Panc1 (cell line): ENCODE measurements at regions of chr1 and their contacts with region 1.

Region 1: GRCh38 chr1:178513278-178514022 is 541 bp downstream of the TEX35 start:
- DNase-seq: no peak
- ATAC-seq: peak; percentile 49; the same call in 1 of the 2 replicates
- H3K4me3 ChIP-seq: no peak overlapping the region
- H3K27ac ChIP-seq: no peak overlapping the region
- H3K4me1 ChIP-seq: no peaks in the 10 kb centered on the region
- H3K27me3 ChIP-seq: no peaks in the 10 kb centered on the region
- CTCF ChIP-seq: no peak

Region 2: DNA sequence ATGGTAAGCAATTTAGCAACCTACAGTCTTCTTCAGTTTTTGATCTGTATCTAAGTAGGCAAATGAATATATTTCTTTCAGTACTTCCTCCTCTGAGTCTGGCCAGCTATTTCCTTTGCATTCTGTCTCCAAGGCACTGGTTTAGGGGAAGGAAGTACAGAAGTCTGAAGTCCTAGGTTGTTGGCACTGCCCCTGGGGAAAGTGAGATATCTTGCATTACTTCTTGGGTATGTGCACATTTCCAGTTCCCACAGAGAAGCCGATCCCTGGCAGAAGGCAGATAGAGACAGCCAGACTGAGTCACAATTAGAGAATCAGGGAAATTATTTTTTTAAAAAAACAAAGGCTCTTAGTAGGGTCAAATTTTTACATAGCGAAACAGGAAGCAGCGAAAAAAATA is 320.8 kb before region 1 on chr1:
- CTCF ChIA-PET with region 1: no interaction called
- POLR2A ChIA-PET with region 1: no interaction called
- in situ Hi-C with region 1: no loop called
- intact Hi-C with region 1: no loop called
- DNase-seq: no peak
- ATAC-seq: peak; percentile 69
- H3K4me3 ChIP-seq: peak overlapping the region in 1 of 2 experiments; percentile 16; a peak in 1 of 4 replicates
- H3K27ac ChIP-seq: peak overlapping the region; percentile 35
- H3K4me1 ChIP-seq: peaks cover 15% of the 10 kb centered on the region; the same call in 1 of the 2 replicates
- H3K27me3 ChIP-seq: no peaks in the 10 kb centered on the region
- CTCF ChIP-seq: no peak

Region 3: DNA sequence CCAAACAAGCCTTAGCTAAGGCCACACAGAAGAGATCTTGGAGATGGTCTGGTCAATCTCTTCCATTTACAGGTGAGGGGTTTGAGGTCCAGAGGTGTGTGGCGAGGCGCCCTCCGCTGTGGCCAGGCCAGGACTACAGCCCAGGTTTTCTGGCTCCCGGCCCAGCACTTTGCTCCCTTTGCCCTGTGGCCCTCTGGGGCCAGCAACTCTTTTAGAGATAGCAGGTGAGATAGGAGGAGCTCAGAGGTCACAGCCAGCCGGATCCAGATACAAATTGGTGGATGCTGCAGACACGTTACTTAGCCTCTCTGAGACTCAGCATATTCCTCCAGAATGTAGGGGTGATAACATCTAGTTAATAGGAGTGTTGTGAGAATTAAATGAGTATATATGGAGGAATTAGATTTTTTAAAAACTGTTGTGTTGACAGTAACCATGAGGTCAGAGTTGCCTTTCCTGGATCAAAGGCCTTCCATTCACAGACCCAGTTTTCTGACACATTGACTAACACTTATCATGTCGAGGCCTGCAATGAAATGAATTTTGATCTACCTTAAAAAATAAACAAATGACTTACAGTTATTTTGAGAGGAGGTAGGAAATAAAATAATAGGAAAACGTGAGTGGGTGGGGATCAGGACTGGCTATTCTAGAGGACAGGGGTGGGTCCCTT is 16.1 kb after region 1 on chr1:
- CTCF ChIA-PET with region 1: no interaction called
- POLR2A ChIA-PET with region 1: no interaction called
- in situ Hi-C with region 1: no loop called
- intact Hi-C with region 1: no loop called
- DNase-seq: no peak
- ATAC-seq: no peak
- H3K4me3 ChIP-seq: no peak overlapping the region
- H3K27ac ChIP-seq: no peak overlapping the region
- H3K4me1 ChIP-seq: 0 out of 2 replicates have a peak, but pooled peaks cover 2% of the 10 kb centered on the region
- H3K27me3 ChIP-seq: no peaks in the 10 kb centered on the region
- CTCF ChIP-seq: no peak

Region 4: GRCh38 chr1:180312926-180313325 is 1799.5 kb after region 1 on chr1:
- CTCF ChIA-PET with region 1: no interaction called
- POLR2A ChIA-PET with region 1: interaction called, 10 read pairs
- in situ Hi-C with region 1: no loop called
- intact Hi-C with region 1: no loop called
- DNase-seq: no peak
- ATAC-seq: no peak
- H3K4me3 ChIP-seq: no peak overlapping the region
- H3K27ac ChIP-seq: no peak overlapping the region
- H3K4me1 ChIP-seq: peaks cover 24% of the 10 kb centered on the region
- H3K27me3 ChIP-seq: no peaks in the 10 kb centered on the region
- CTCF ChIP-seq: no peak